ENCODE measurements at regions of chr6 and their contacts with region 1.

Region 1: DNA sequence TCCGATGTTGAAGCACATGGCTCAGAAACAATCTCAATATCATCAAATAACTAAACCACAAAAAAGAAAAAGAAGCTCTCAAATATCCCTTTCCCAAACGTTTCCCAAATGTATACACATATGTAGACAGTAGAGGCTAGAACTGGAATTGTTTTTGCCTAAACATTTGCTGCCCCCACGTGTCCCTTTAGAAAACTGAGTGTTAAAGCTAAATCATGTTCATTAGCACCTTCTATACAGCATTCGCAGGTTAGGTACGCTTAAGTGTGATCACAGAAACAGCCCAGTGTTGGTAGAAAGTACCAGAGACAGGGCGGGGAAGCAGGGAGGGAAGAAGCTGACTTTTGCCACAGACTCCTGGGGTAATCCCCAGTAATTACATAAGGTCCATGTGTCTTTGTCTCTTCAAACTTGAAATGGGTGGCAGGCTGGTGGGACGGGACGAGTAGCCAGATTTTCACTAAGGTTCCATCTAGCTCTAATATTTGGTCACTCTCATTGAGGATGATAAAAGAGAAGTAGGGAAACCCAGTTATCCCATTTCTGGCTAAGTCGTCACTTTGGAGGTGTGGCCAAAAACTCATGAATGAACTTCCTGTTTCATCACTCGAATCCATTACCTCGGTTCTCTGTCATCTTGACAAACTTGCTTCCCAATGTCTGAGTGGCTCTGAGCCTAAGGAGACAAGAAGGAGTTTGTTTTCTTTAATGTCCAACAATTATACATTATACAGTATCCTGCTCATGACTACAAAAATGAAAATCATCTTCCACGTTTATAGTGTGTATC is 15.0 kb upstream of the TFAP2A start:
- DNase-seq: no peak
- ATAC-seq: peak in 1 of 4 donors; percentile 19
- H3K4me3 ChIP-seq: no peak overlapping the region
- H3K27ac ChIP-seq: no peak overlapping the region
- H3K4me1 ChIP-seq: peaks cover 11% of the 10 kb centered on the region
- H3K27me3 ChIP-seq: peaks cover 0 to 39% (median 10%) of the 10 kb centered on the region in 3 donors
- CTCF ChIP-seq: peak; percentile 32

Region 2: GRCh38 chr6:8983188-8983688 is 1446.6 kb before region 1 on chr6:
- intact Hi-C with region 1: loop called (anchors 5 kb)
- DNase-seq: peak; percentile 34 to 58
- ATAC-seq: peak; percentile 70 to 81 (median 72)
- H3K4me3 ChIP-seq: no peak overlapping the region
- H3K27ac ChIP-seq: no peak overlapping the region
- H3K4me1 ChIP-seq: no peaks in the 10 kb centered on the region
- H3K27me3 ChIP-seq: peaks cover 0 to 2% (median 0%) of the 10 kb centered on the region in 3 donors
- CTCF ChIP-seq: peak; percentile 89

Region 3: DNA sequence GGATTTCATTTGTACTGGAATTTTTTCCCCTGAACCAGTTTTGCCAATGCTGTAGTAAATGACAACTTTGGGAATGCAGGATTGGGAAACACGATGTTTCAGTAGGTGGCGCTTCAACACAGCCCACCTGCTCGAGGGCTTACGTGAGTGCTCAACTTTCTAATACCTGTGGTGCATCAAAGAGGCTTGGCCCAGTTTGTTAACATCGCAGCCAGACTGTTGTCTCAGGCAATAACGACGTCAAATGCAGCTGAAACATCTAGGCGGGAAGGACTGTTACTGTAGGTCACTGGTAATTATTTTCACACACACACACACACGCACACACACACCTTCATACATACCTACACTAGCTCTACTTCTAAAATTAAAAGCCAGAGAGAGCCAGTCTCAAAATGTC is 1179.0 kb before region 1 on chr6:
- intact Hi-C with region 1: loop called in 1 of 2 experiments (anchors 5 kb)
- DNase-seq: no peak
- ATAC-seq: no peak
- H3K4me3 ChIP-seq: no peak overlapping the region
- H3K27ac ChIP-seq: no peak overlapping the region
- H3K4me1 ChIP-seq: no peaks in the 10 kb centered on the region
- H3K27me3 ChIP-seq: no peaks in the 10 kb centered on the region
- CTCF ChIP-seq: peak; percentile 39

Region 4: GRCh38 chr6:9540534-9541126 is 889.2 kb before region 1 on chr6:
- intact Hi-C with region 1: loop called in 1 of 2 experiments (anchors 10 kb)
- DNase-seq: no peak
- ATAC-seq: no peak
- H3K4me3 ChIP-seq: no peak overlapping the region
- H3K27ac ChIP-seq: no peak overlapping the region
- H3K4me1 ChIP-seq: no peaks in the 10 kb centered on the region
- H3K27me3 ChIP-seq: no peaks in the 10 kb centered on the region
- CTCF ChIP-seq: peak; percentile 40

Region 5: GRCh38 chr6:10030942-10031537 is 398.8 kb before region 1 on chr6:
- intact Hi-C with region 1: loop called in 1 of 2 experiments (anchors 10 kb)
- DNase-seq: no peak
- ATAC-seq: no peak
- H3K4me3 ChIP-seq: no peak overlapping the region
- H3K27ac ChIP-seq: no peak overlapping the region
- H3K4me1 ChIP-seq: no peaks in the 10 kb centered on the region
- H3K27me3 ChIP-seq: no peaks in the 10 kb centered on the region
- CTCF ChIP-seq: peak; percentile 25

Region 6: DNA sequence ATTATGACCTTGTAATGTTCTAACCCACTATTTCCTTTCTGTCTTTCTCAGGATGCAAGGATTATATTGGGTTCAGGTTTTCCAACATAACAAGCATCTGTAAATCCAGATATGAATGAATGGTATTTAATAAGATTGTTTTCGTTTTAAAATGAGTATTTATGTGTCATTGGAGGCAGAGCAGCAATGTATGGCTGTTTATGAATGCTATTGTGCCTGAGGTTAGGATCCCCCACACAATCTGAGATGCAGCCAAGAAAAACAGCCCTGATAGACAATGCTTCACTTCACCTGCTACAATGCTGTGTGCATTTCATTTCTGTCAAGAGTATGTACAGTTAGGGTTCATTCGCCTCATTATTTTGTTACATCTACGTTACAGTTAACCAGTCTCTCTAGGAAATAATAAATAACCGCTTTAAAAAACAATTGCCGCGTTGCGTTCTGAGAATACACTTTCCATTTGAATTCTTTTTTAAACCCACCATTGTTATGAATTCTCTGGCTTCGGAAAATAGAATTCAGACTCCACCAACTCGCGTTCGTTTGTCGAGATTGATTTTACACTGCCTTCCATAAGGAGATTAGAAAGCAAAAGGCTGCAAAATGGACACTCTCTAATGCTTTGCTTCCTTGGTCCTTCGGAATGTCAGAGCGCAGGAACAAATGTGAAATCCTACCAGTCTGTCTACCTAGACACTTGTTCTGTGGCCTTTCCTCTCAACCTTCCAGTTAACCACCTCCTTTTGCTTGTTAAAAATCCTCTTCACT is 34.5 kb before region 1 on chr6:
- intact Hi-C with region 1: no loop called
- DNase-seq: no peak
- ATAC-seq: no peak
- H3K4me3 ChIP-seq: no peak overlapping the region
- H3K27ac ChIP-seq: no peak overlapping the region
- H3K4me1 ChIP-seq: no peaks in the 10 kb centered on the region
- H3K27me3 ChIP-seq: peaks cover 24 to 98% (median 33%) of the 10 kb centered on the region in 3 donors
- CTCF ChIP-seq: no peak

Region 7: DNA sequence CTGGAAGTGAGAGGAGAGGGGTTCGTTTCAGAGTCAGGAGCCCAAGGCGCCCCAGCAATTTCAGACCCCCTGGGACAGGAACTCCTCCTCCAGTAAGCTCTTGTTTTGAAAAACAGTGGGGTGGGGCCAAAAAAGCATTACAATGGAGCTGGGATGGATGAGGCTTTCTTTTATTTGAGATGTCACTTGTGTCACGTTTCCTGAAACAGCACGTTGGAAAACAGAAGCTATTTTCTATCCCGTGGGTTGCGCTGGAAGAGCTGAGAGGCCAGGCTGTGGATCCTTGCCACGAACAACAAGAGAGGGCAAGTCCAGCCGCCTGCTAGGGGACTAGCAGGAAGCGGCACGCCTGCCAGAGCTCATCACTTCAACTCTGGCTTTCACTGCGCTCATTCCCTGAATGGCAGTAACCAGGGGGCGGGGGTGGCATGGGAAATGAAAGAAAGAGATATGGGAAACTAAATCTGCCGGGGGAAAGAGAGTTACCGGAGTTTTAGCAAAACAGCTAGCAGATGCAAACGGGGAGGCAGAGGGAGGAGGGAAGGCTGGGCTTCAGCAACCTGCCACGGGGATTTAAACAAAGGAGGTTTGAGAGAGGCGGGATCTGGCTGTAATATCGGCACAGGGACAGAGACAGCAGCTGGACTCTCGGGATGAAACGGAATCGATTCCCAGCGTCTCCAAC is 125.9 kb after region 1 on chr6:
- intact Hi-C with region 1: no loop called
- DNase-seq: peak; percentile 40 to 66
- ATAC-seq: peak; percentile 74 to 90 (median 88)
- H3K4me3 ChIP-seq: peak overlapping the region; percentile 52
- H3K27ac ChIP-seq: peak overlapping the region; percentile 69
- H3K4me1 ChIP-seq: no peaks in the 10 kb centered on the region
- H3K27me3 ChIP-seq: peaks cover 0 to 3% (median 0%) of the 10 kb centered on the region in 3 donors
- CTCF ChIP-seq: no peak

Region 8: DNA sequence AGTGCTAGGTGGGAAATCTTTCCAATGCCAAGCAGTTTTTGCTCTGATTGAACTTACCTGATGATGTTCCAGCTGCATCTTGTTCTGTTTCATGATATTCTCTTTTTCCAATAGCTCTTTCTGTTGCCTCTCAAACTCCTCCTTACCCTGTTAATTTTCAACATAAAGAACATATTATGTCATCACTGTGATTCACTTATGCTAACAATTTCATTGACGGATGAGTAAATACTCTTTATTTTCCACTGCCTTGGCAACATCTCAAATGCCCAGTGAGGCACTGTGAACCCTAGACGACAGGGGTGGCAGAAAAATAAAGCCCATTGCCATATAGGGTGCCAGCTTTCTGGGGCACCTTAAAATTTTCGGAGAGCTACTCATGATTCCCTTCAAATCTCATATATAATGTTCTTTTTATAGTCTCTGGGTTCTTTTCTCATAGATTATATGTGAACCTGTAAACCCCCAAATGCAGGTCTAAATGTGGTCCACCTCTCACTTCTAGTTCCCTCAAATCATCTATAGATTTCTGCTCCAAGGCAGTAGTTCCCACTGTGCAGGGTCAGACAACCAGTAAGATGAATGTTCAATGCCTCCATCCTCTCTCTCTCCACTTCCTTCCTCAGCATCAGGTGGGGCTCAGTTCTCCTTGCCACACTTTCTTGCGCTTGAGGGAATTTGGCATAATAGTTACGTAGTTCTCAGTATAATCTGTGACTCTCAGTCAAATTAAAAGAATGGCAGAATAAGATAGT is 758.5 kb after region 1 on chr6:
- intact Hi-C with region 1: no loop called
- DNase-seq: no peak
- ATAC-seq: no peak
- H3K4me3 ChIP-seq: no peak overlapping the region
- H3K27ac ChIP-seq: no peak overlapping the region
- H3K4me1 ChIP-seq: no peaks in the 10 kb centered on the region
- H3K27me3 ChIP-seq: no peaks in the 10 kb centered on the region
- CTCF ChIP-seq: no peak

Measured in psoas muscle (tissue), 8 donors.